AG04450 (cell line): ENCODE measurements at regions of chr12 and their contacts with region 1.

Region 1: DNA sequence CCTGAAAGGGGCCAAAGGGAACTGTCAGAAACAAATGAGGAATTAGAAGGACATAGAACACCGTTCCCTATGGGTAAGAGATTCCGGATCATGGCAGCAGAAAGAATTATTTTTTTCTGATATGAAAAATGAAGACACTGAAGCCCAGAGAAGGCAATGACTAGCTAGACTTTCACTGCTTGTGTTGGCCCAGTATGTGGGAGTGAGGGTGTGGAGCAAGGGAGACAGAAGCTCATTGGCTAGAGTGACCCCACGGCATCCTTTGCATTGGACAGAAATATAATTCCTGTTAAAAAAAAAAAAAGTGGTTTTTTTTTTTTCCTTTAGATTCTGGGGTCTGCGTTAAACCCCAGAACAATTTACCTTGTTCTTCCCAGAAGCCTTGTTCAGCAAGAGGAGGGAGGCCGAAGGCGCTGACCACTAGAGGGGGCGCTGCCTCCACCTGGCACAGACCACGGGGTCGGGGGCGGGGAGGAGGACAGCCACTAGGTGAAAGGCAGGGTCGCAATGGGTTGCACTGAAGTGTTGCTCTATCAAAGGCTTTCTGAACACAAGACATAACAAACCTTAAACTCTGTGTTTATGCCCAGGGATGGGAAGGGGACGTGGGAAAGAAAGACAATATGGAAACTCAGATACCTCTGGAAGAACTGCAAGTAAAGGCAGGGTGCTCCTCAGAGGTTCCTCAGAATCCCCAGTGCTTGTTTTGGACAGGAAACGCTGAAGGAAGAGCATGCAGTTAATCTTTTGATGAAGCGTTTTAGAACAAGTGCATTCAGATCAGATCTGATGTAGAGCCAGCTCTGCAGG is 156.8 kb downstream of the KCNA5 start:
- DNase-seq: no peak
- H3K4me3 ChIP-seq: no peak overlapping the region
- H3K27ac ChIP-seq: no peak overlapping the region
- H3K27me3 ChIP-seq: no peaks in the 10 kb centered on the region
- CTCF ChIP-seq: peak; percentile 67

Region 2: GRCh38 chr12:5114470-5114869 is 86.0 kb before region 1 on chr12:
- CTCF ChIA-PET with region 1: no interaction called
- POLR2A ChIA-PET with region 1: no interaction called
- DNase-seq: no peak
- H3K4me3 ChIP-seq: no peak overlapping the region
- H3K27ac ChIP-seq: no peak overlapping the region
- H3K27me3 ChIP-seq: no peaks in the 10 kb centered on the region
- CTCF ChIP-seq: no peak

Region 3: DNA sequence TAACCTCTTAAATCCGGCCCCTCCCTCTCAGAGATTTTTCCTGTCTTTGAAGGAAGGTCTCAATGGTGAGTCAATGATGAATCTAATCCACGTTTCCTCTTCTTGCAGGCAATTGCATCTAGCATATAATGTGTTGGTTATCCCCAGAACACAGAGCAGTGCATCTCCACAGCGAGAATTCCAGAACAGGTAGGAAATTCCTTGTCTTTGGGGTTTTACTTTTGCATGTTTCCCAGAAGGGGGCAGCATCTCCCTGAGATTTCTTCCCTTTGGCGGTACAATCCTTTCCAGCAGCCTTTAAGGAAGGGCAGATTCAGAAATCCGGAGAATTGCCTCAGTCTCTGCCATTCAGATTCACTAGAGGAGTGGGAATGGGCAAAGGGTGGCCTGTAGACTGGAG is 28.8 kb before region 1 on chr12:
- CTCF ChIA-PET with region 1: interaction called, 10 read pairs
- POLR2A ChIA-PET with region 1: no interaction called
- DNase-seq: peak; percentile 47
- H3K4me3 ChIP-seq: no peak overlapping the region
- H3K27ac ChIP-seq: no peak overlapping the region
- H3K27me3 ChIP-seq: no peaks in the 10 kb centered on the region
- CTCF ChIP-seq: peak; percentile 81

Region 4: GRCh38 chr12:5210923-5211290 is 10.4 kb after region 1 on chr12:
- CTCF ChIA-PET with region 1: no interaction called
- POLR2A ChIA-PET with region 1: no interaction called
- DNase-seq: no peak
- H3K4me3 ChIP-seq: no peak overlapping the region
- H3K27ac ChIP-seq: no peak overlapping the region
- H3K27me3 ChIP-seq: peaks cover 7% of the 10 kb centered on the region
- CTCF ChIP-seq: no peak

Region 5: GRCh38 chr12:5230156-5230555 is 29.7 kb after region 1 on chr12:
- CTCF ChIA-PET with region 1: no interaction called
- POLR2A ChIA-PET with region 1: no interaction called
- DNase-seq: peak; percentile 51
- H3K4me3 ChIP-seq: no peak overlapping the region
- H3K27ac ChIP-seq: no peak overlapping the region
- H3K27me3 ChIP-seq: peaks cover 3% of the 10 kb centered on the region
- CTCF ChIP-seq: no peak